Naive thymus-derived CD4-positive, alpha-beta T cell (primary cell): ENCODE measurements at regions of chr2 and their contacts with region 1.

Region 1: GRCh38 chr2:68766376-68766845 is 31.8 kb downstream of the ARHGAP25 start:
- DNase-seq: peak; percentile 27 to 85 (median 78)
- ATAC-seq: peak; percentile 86
- H3K4me3 ChIP-seq: peak overlapping the region; percentile 36
- H3K4me3 Mint-ChIP-seq: peak overlapping the region; percentile 77 to 94 (median 82)
- H3K27ac ChIP-seq: peak overlapping the region; percentile 82
- H3K27ac Mint-ChIP-seq: peak overlapping the region in 8 of 9 donors; percentile 93 to 99 (median 97)
- H3K4me1 ChIP-seq: peaks cover 97 to 98% of the 10 kb centered on the region in 2 donors
- H3K4me1 Mint-ChIP-seq: peaks cover 70 to 100% (median 99%) of the 10 kb centered on the region in 7 donors
- H3K27me3 ChIP-seq: no peaks in the 10 kb centered on the region
- H3K27me3 Mint-ChIP-seq: no peaks in the 10 kb centered on the region

Region 2: GRCh38 chr2:68684197-68684596 is 82.2 kb before region 1 on chr2:
- CTCF ChIA-PET with region 1: no interaction called
- POLR2A ChIA-PET with region 1: no interaction called
- intact Hi-C with region 1: no loop called
- DNase-seq: no peak
- ATAC-seq: no peak
- H3K4me3 ChIP-seq: no peak overlapping the region
- H3K4me3 Mint-ChIP-seq: no peak overlapping the region
- H3K27ac ChIP-seq: no peak overlapping the region
- H3K27ac Mint-ChIP-seq: no peak overlapping the region
- H3K4me1 ChIP-seq: no peaks in the 10 kb centered on the region
- H3K4me1 Mint-ChIP-seq: peaks cover 0 to 8% (median 0%) of the 10 kb centered on the region in 7 donors
- H3K27me3 ChIP-seq: no peaks in the 10 kb centered on the region
- H3K27me3 Mint-ChIP-seq: peaks cover 9 to 30% (median 14%) of the 10 kb centered on the region in 5 donors

Region 3: DNA sequence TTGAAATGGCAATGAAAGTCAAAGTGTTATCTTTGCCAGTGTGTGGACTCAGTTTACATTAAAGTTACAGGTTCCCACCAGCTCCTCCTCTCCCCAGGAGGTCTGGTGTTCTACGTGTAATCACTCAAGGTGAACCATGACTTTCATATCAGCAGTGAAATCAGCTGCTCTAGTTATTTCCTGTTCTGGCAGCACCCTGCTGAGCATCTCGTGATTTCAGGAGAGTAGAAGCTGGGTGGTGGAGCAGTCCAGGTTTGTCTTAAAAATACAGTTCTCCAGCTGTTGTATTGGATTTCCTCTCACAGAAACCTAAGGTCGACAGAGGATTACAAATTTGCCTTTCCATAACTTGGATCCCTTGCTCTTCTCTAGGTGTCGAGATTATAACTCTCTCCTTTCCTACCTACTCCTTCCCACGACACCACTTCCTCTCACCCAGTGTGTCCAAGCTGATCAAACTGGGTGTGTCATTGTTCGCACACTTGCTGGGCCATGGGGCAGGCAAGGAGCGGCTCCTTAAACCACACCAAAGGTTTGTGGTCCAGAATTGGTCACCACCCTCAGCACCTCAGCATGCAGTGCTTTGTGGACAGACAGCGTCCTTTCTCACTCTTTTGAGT is 44.8 kb before region 1 on chr2:
- CTCF ChIA-PET with region 1: interaction called, 3 read pairs
- POLR2A ChIA-PET with region 1: interaction called, 35 read pairs
- intact Hi-C with region 1: loop called in 1 of 2 experiments (anchors 1 kb)
- DNase-seq: peak in 7 of 9 donors; percentile 52 to 69 (median 61)
- ATAC-seq: peak; percentile 83
- H3K4me3 ChIP-seq: peak overlapping the region; percentile 9
- H3K4me3 Mint-ChIP-seq: peak overlapping the region; percentile 76 to 91 (median 82)
- H3K27ac ChIP-seq: peak overlapping the region; percentile 68
- H3K27ac Mint-ChIP-seq: peak overlapping the region; percentile 78 to 97 (median 95)
- H3K4me1 ChIP-seq: peaks cover 72 to 87% of the 10 kb centered on the region in 2 donors
- H3K4me1 Mint-ChIP-seq: peaks cover 65 to 96% (median 93%) of the 10 kb centered on the region in 7 donors
- H3K27me3 ChIP-seq: no peaks in the 10 kb centered on the region
- H3K27me3 Mint-ChIP-seq: no peaks in the 10 kb centered on the region

Region 4: GRCh38 chr2:68734688-68735525 is 31.5 kb before region 1 on chr2 and contains the start of gene ARHGAP25:
- CTCF ChIA-PET with region 1: interaction called, 3 read pairs
- POLR2A ChIA-PET with region 1: interaction called, 36 read pairs
- intact Hi-C with region 1: loop called (anchors 1 kb)
- DNase-seq: peak; percentile 20 to 81 (median 69)
- ATAC-seq: peak; percentile 78
- H3K4me3 ChIP-seq: peak within 1 kb of the TSS; percentile 77
- H3K4me3 Mint-ChIP-seq: no peak within 1 kb of the TSS
- H3K27ac ChIP-seq: peak within 1 kb of the TSS; percentile 78
- H3K27ac Mint-ChIP-seq: no peak within 1 kb of the TSS
- H3K4me1 ChIP-seq: peaks cover 38 to 48% of the 10 kb centered on the region in 2 donors
- H3K4me1 Mint-ChIP-seq: peaks cover 23 to 37% (median 32%) of the 10 kb centered on the region in 7 donors
- H3K27me3 ChIP-seq: no peaks in the 10 kb centered on the region
- H3K27me3 Mint-ChIP-seq: no peaks in the 10 kb centered on the region
- total RNA-seq, gene ARHGAP25: 68.2 to 139 (median 116) TPM

Region 5: GRCh38 chr2:68742626-68743415 is 23.6 kb before region 1 on chr2:
- CTCF ChIA-PET with region 1: interaction called, 3 read pairs
- POLR2A ChIA-PET with region 1: interaction called, 288 read pairs
- intact Hi-C with region 1: no loop called
- DNase-seq: no peak
- ATAC-seq: no peak
- H3K4me3 ChIP-seq: peak overlapping the region; percentile 27
- H3K4me3 Mint-ChIP-seq: peak overlapping the region in 8 of 10 donors; percentile 43 to 82 (median 67)
- H3K27ac ChIP-seq: peak overlapping the region; percentile 5
- H3K27ac Mint-ChIP-seq: peak overlapping the region in 8 of 9 donors; percentile 42 to 87 (median 76)
- H3K4me1 ChIP-seq: peaks cover 93% of the 10 kb centered on the region in 2 donors
- H3K4me1 Mint-ChIP-seq: peaks cover 69 to 98% (median 93%) of the 10 kb centered on the region in 7 donors
- H3K27me3 ChIP-seq: no peaks in the 10 kb centered on the region
- H3K27me3 Mint-ChIP-seq: no peaks in the 10 kb centered on the region

Region 6: GRCh38 chr2:68789603-68790002 is 23.2 kb after region 1 on chr2:
- CTCF ChIA-PET with region 1: no interaction called
- POLR2A ChIA-PET with region 1: interaction called, 12 read pairs
- intact Hi-C with region 1: no loop called
- DNase-seq: no peak
- ATAC-seq: peak; percentile 73
- H3K4me3 ChIP-seq: no peak overlapping the region
- H3K4me3 Mint-ChIP-seq: no peak overlapping the region
- H3K27ac ChIP-seq: peak overlapping the region; percentile 40
- H3K27ac Mint-ChIP-seq: peak overlapping the region in 6 of 9 donors; percentile 13 to 88 (median 44)
- H3K4me1 ChIP-seq: peaks cover 10 to 44% of the 10 kb centered on the region in 2 donors
- H3K4me1 Mint-ChIP-seq: peaks cover 29 to 48% (median 44%) of the 10 kb centered on the region in 7 donors
- H3K27me3 ChIP-seq: no peaks in the 10 kb centered on the region
- H3K27me3 Mint-ChIP-seq: no peaks in the 10 kb centered on the region

Region 7: DNA sequence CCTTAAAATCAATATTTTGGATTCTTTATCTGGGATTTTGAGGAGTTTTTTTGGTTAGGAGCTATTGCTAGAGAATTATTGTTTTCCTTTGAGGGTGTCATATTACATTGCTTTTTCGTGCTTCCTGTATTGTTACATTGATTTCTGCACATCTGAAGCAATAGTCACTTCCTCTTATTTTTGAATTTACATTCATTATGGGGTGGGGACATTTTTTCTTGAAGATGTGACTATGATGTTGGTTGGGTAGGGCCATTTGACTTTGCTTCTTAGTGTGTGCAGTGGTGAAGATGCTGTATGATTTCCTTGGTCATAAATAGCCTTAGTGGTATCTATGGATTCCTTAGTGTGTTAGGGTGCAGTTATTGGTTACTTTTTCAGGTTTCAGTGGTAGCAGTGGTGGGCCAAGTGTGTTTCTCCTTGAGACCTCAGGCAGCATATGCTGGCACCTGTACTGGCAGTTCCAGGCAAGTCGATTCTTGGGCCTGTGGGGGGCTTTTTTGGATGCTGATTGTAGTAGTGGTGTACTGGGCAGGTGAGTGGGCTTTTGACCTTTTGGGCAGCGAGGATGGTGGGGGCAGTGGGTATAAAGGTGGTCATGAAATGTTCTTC is 30.0 kb after region 1 on chr2:
- CTCF ChIA-PET with region 1: interaction called, 3 read pairs
- POLR2A ChIA-PET with region 1: interaction called, 12 read pairs
- intact Hi-C with region 1: loop called in 1 of 2 experiments (anchors 1 kb)
- DNase-seq: peak in 6 of 9 donors; percentile 33 to 62 (median 54)
- ATAC-seq: peak; percentile 73
- H3K4me3 ChIP-seq: peak overlapping the region; percentile 15
- H3K4me3 Mint-ChIP-seq: peak overlapping the region; percentile 62 to 86 (median 72)
- H3K27ac ChIP-seq: peak overlapping the region; percentile 44
- H3K27ac Mint-ChIP-seq: peak overlapping the region; percentile 83 to 98 (median 88)
- H3K4me1 ChIP-seq: peaks cover 52 to 60% of the 10 kb centered on the region in 2 donors
- H3K4me1 Mint-ChIP-seq: peaks cover 64 to 92% (median 82%) of the 10 kb centered on the region in 7 donors
- H3K27me3 ChIP-seq: no peaks in the 10 kb centered on the region
- H3K27me3 Mint-ChIP-seq: no peaks in the 10 kb centered on the region

Region 8: DNA sequence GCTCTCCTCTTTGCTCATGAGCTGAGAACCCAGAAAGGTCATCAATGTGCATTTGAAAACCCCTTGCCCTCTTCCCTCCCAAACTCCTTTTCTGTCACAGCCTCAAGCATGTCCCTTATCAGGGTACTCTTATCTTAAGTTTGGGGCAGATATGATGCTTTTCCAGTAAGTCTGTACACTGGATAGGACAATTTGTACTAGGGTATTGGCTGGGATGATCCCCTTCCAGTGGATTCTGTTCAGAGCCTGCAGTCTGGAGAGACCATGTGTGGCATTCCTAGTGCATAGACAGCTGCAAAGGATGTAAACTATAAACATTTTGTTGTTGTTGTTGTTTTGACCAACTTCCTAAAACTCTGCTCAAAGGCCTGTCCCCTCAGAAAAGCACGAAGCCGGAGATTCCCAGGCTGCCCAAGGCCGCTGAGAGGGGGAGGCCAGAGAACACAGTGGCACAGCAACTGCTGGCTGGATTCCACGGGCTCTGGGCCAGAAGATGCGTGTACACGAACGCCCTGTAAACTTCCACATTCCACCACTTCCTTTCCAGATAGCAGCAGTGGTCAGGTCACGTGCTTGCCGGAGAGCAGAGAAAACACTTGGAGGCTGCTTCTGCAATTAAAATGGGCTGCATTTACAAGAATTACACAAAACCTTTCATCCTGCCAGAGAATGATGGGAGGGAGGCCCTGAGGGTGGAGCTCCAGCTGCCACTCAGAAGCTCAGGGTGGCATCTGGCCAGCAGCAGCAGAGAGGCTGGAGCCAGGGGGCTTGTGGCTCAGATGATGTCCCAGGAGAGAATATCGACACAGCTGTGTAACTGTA is 62.7 kb after region 1 on chr2:
- CTCF ChIA-PET with region 1: interaction called, 8 read pairs
- POLR2A ChIA-PET with region 1: interaction called, 11 read pairs
- intact Hi-C with region 1: loop called (anchors 1 kb)
- DNase-seq: peak; percentile 43 to 87 (median 79)
- ATAC-seq: peak; percentile 76
- H3K4me3 ChIP-seq: peak overlapping the region; percentile 15
- H3K4me3 Mint-ChIP-seq: peak overlapping the region; percentile 67 to 89 (median 78)
- H3K27ac ChIP-seq: peak overlapping the region; percentile 61
- H3K27ac Mint-ChIP-seq: peak overlapping the region; percentile 84 to 98 (median 94)
- H3K4me1 ChIP-seq: peaks cover 32 to 51% of the 10 kb centered on the region in 2 donors
- H3K4me1 Mint-ChIP-seq: peaks cover 59 to 85% (median 71%) of the 10 kb centered on the region in 7 donors
- H3K27me3 ChIP-seq: no peaks in the 10 kb centered on the region
- H3K27me3 Mint-ChIP-seq: no peaks in the 10 kb centered on the region

Region 9: GRCh38 chr2:68849579-68850030 is 83.2 kb after region 1 on chr2:
- CTCF ChIA-PET with region 1: no interaction called
- POLR2A ChIA-PET with region 1: no interaction called
- intact Hi-C with region 1: no loop called
- DNase-seq: no peak
- ATAC-seq: no peak
- H3K4me3 ChIP-seq: no peak overlapping the region
- H3K4me3 Mint-ChIP-seq: no peak overlapping the region
- H3K27ac ChIP-seq: no peak overlapping the region
- H3K27ac Mint-ChIP-seq: no peak overlapping the region
- H3K4me1 ChIP-seq: no peaks in the 10 kb centered on the region
- H3K4me1 Mint-ChIP-seq: peaks cover 0 to 2% (median 0%) of the 10 kb centered on the region in 7 donors
- H3K27me3 ChIP-seq: no peaks in the 10 kb centered on the region
- H3K27me3 Mint-ChIP-seq: peaks cover 4 to 55% (median 11%) of the 10 kb centered on the region in 5 donors